ENCODE measurements at regions of chr20 and their contacts with region 1.

Region 1: GRCh38 chr20:20593447-20594170 is 118.8 kb downstream of the RALGAPA2 start:
- DNase-seq: peak in 8 of 10 donors; percentile 18 to 91 (median 42)

Region 2: GRCh38 chr20:20083807-20084206 is 509.8 kb before region 1 on chr20:
- intact Hi-C with region 1: loop called (anchors 10 kb)
- DNase-seq: no peak

Region 3: DNA sequence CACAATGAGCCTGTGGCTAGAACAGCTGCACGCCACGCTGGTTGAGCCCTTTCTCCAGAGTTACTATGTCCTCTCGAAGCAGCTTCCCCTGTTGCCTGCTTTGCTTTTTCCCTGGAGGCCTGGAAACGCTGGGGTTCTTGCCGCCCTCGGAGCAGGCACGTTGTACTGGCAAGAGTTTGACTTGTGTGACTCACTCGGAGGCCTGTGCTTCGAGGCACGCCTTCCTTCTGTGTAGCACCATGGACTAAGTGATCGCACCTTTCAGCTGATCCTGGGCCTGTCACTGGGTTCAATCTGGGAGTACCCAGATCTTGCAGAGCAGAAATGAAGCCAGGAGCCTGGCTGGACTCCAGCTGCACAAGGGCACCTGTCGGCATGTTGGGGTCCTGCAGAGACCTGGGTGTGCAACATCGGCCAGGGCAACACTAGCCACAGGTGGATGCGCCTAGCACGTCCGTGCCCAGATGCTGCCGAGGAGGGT is 220.5 kb before region 1 on chr20:
- intact Hi-C with region 1: no loop called
- DNase-seq: peak in 4 of 10 donors; percentile 49 to 92 (median 88)

Region 4: DNA sequence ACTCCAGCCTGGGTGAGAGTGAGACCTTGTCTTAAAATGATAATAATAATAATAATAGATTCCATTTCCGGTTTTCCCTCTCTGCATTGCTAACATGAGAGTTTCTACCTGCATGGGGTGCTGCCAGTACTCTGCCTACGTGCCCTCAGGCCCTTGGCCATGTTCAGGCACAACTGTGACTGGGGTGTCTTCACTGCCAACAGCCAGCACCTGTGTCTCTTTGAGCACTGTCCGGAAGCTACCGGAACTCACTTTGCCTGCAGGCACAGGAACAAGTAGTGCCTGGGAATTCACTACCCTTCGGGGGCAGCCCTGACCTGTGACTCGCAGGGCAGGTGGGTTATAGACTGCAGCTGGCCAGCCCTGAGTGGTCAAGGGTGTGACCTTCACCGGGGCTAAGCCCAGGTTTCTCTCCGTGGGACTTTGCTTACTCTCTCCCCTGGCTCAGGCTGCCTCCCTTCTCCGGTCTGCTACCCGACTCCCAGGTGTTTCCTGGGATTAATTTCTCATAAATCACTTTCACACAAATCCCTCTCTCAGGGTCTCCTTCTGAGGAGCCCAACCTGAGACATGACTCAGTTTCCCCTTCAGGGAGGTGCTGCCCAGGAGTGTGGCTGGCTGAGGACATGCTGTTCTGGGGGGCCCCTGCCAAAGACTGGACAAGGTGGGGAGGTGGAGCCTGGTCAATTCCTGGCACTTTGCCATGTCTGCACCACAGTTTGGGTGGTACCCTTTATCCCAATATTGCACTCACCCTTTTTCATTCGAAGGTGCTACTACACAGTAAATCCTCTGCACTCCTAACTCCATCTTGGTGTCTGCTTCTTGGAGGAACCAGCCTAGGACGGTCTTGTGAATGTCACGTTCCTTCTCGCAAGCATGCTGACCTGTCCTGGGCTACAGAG is 198.3 kb after region 1 on chr20:
- intact Hi-C with region 1: no loop called
- DNase-seq: no peak

Region 5: GRCh38 chr20:20824924-20825584 is 231.4 kb after region 1 on chr20:
- intact Hi-C with region 1: loop called (anchors 10 kb)
- DNase-seq: peak in 8 of 10 donors; percentile 43 to 91 (median 64)

Region 6: GRCh38 chr20:21618759-21619416 is 1025.3 kb after region 1 on chr20:
- intact Hi-C with region 1: no loop called
- DNase-seq: no peak